A549 (cell line): ENCODE measurements at regions of chr13 and their contacts with region 1.

Region 1: GRCh38 chr13:29508130-29508875 is 87.2 kb downstream of the SLC7A1 start:
- DNase-seq: peak; percentile 69 to 70
- ATAC-seq: peak; percentile 80 to 91
- H3K4me3 ChIP-seq: no peak overlapping the region
- H3K27ac ChIP-seq: no peak overlapping the region
- H3K4me1 ChIP-seq: peaks cover 5% of the 10 kb centered on the region; the same call in 1 of the 3 replicates
- CTCF ChIP-seq: peak; percentile 72
- EP300 ChIP-seq: no peak
- POLR2A ChIP-seq: no peak
- RAD21 ChIP-seq: peak; percentile 71 to 76

Region 2: DNA sequence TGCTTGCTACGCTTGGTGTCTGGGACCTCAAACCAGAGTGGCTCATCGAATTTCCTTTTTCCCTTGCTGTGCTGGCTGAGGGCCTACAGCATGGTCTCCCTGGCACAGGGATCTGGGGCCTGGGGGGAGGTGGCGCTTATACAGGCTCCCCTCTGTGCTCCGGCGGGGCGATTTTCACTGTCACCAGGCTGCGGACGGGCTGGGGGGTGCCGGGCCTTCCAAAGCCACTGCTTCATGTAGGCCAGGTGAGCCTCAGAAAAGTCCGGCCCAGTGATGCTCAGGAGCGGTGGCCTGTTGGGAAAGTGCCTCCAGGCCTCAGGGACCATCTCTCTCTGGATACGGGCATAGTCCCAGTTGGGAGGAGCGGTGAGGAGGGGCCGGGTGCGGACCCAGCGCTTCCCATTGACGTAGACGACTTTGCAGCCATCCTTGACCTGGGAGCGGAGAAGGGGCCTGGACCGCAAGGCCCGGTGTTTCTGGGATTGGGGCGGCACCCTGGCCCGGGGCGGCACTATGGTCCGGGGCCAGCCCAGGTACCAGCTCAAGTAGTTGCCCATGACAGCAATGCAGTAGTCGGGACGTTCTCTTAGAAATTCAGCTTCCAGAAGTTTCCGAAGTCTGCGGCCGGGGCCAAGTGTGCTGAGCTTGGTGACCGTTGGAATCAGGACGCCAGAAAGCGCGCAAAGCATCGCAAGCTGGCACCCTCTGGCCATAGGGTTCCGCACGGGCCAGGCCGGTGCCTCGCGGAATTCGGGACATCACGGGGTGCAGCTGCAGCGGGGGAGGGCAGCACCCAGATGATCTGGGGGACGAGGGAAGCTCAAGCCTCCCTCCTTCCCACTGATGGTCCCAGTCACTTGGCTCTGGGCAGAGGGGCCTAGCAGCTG is 168.7 kb before region 1 on chr13:
- CTCF ChIA-PET with region 1: no interaction called
- POLR2A ChIA-PET with region 1: no interaction called
- DNase-seq: no peak
- ATAC-seq: no peak
- H3K4me3 ChIP-seq: no peak overlapping the region
- H3K27ac ChIP-seq: no peak overlapping the region
- H3K4me1 ChIP-seq: no peaks in the 10 kb centered on the region
- CTCF ChIP-seq: no peak
- EP300 ChIP-seq: no peak
- POLR2A ChIP-seq: no peak
- RAD21 ChIP-seq: no peak

Region 3: DNA sequence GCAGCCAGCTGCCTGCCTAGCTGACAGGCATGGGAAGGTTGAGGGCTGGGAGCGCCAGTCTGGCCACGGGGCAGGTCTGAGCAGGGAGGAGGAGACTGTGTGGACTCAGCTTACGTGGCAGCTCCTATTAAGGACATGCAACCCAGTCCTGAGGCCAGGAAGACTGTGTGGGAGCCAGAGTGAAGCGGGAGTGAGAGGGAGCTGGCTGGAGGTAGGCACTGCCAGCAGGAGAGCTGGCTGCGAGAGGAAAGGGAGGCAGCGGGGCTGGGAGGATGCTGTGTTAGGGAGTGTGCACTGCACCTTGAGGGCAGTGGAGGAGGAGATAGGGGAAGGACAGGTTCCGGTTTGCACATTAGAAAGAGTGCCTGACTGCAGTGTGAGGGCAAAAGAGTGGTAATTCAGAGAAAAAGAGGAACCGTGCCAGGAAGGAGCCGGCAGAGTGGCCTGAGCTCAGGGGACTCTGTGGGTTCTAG is 12.0 kb before region 1 on chr13:
- CTCF ChIA-PET with region 1: interaction called, 43 read pairs
- POLR2A ChIA-PET with region 1: no interaction called
- DNase-seq: peak in 1 of 2 experiments; percentile 12
- ATAC-seq: peak; percentile 56 to 67; a peak in 5 of 6 replicates
- H3K4me3 ChIP-seq: no peak overlapping the region
- H3K27ac ChIP-seq: no peak overlapping the region
- H3K4me1 ChIP-seq: no peaks in the 10 kb centered on the region
- CTCF ChIP-seq: no peak
- EP300 ChIP-seq: no peak
- POLR2A ChIP-seq: no peak
- RAD21 ChIP-seq: no peak

Region 4: GRCh38 chr13:29529754-29530153 is 21.5 kb after region 1 on chr13:
- CTCF ChIA-PET with region 1: interaction called, 17 read pairs
- POLR2A ChIA-PET with region 1: no interaction called
- DNase-seq: no peak
- ATAC-seq: no peak
- H3K4me3 ChIP-seq: no peak overlapping the region
- H3K27ac ChIP-seq: no peak overlapping the region
- H3K4me1 ChIP-seq: no peaks in the 10 kb centered on the region
- CTCF ChIP-seq: no peak
- EP300 ChIP-seq: no peak
- POLR2A ChIP-seq: no peak
- RAD21 ChIP-seq: no peak

Region 5: GRCh38 chr13:29707876-29708543 is 199.7 kb after region 1 on chr13:
- CTCF ChIA-PET with region 1: interaction called, 38 read pairs
- POLR2A ChIA-PET with region 1: no interaction called
- DNase-seq: peak; percentile 6 to 32
- ATAC-seq: peak; percentile 66 to 93; a peak in 5 of 6 replicates
- H3K4me3 ChIP-seq: no peak overlapping the region
- H3K27ac ChIP-seq: no peak overlapping the region
- H3K4me1 ChIP-seq: no peaks in the 10 kb centered on the region
- CTCF ChIP-seq: peak; percentile 36; the same call in 2 of the 3 replicates
- EP300 ChIP-seq: no peak
- POLR2A ChIP-seq: no peak
- RAD21 ChIP-seq: peak; percentile 51 to 65; a peak in 4 of 5 replicates